ENCODE measurements at regions of chr3 and their contacts with region 1.

Region 1: DNA sequence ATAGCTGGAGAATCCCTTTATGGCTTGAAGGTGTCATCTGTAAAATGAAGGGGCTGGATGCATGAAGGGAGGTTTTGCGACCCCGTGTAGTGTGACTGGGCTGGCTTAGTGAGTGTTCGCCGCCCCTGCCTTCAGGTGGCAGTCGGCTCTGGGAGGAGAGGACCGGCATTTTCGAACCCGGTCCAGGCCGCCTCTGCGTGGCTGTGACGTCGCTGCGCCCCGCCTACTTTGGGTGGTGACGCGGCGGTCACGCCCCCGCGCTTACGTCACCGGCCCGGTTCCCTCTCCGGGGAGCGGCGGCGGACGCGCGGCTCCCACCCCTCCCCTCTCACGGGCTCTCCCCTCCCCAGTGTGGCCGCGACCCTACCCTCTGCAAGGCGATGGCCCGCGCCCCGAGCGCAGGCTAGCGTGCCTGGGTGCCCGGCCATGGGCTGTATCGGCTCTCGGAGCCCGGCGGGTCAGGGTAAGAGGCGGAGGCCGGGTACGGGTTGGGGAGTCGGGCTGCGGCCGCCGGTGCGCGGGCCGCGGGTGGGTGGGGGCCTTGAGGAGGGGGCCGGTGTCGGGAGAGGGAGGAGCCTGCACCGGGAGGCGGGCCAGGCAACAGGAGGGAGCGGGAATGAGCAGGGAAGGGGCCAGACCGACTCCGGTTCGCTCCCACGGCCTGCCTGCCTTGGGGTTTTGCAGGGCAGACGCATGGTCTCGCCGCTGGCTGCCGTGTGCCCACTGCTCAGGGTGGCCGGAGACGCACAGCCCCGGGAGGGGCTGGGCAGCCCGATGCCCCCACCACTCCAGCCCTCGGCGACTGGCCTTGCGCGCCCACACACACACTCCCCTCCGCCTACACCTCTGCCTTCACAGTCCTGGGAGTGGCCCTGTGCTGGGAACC is 1.5 kb upstream of the FAM131A start:
- DNase-seq: peak; percentile 89
- CTCF ChIP-seq: peak; percentile 7

Region 2: GRCh38 chr3:184154885-184155643 is 180.8 kb before region 1 on chr3 and contains the start of gene DVL3:
- CTCF ChIA-PET with region 1: no interaction called
- POLR2A ChIA-PET with region 1: interaction called, 11 read pairs
- DNase-seq: peak; percentile 91
- CTCF ChIP-seq: no peak

Region 3: GRCh38 chr3:184282941-184283340 is 53.0 kb before region 1 on chr3:
- CTCF ChIA-PET with region 1: no interaction called
- POLR2A ChIA-PET with region 1: no interaction called
- DNase-seq: no peak
- CTCF ChIP-seq: no peak

Region 4: GRCh38 chr3:184354121-184354728 is 18.3 kb after region 1 on chr3:
- CTCF ChIA-PET with region 1: interaction called, 15 read pairs
- POLR2A ChIA-PET with region 1: interaction called, 4 read pairs
- DNase-seq: peak; percentile 84
- CTCF ChIP-seq: peak; percentile 87